ENCODE measurements at regions of chr4 and their contacts with region 1.

Region 1: GRCh38 chr4:177047070-177047850 is 254.5 kb upstream of the VEGFC start:
- DNase-seq: no peak
- H3K4me3 ChIP-seq: no peak overlapping the region
- H3K27ac ChIP-seq: no peak overlapping the region
- H3K4me1 ChIP-seq: peaks cover 0 to 7% (median 0%) of the 10 kb centered on the region in 4 donors
- H3K27me3 ChIP-seq: no peaks in the 10 kb centered on the region
- CTCF ChIP-seq: peak; percentile 73 to 88 (median 81)
- EP300 ChIP-seq: no peak
- POLR2A ChIP-seq: no peak

Region 2: GRCh38 chr4:176377780-176378179 is 669.5 kb before region 1 on chr4:
- intact Hi-C with region 1: loop called (anchors 2 kb)
- DNase-seq: no peak
- H3K4me3 ChIP-seq: no peak overlapping the region
- H3K27ac ChIP-seq: no peak overlapping the region
- H3K4me1 ChIP-seq: no peaks in the 10 kb centered on the region
- H3K27me3 ChIP-seq: no peaks in the 10 kb centered on the region
- CTCF ChIP-seq: peak; percentile 12 to 44 (median 29)
- EP300 ChIP-seq: no peak
- POLR2A ChIP-seq: no peak

Region 3: DNA sequence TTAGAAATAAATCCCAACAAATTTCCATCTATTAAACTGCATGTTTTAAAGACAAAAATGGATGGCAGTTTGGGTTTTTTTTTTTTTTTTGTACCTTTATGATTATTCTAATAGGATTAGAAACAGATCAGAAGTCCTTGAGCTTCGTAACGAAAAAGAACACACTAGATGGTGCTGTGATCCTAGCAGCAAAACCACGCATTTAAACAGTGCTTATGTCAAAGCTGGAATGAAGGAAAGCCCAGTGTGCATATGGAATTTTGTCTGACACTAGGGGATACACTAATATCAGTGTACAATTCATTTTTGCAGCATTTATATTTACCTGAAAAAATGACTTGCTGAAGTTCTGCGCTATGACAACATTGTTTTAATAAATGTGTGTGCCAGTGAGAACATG is 483.7 kb before region 1 on chr4:
- intact Hi-C with region 1: loop called (anchors 2 kb)
- DNase-seq: no peak
- H3K4me3 ChIP-seq: no peak overlapping the region
- H3K27ac ChIP-seq: no peak overlapping the region
- H3K4me1 ChIP-seq: no peaks in the 10 kb centered on the region
- H3K27me3 ChIP-seq: no peaks in the 10 kb centered on the region
- CTCF ChIP-seq: peak; percentile 22 to 43 (median 24)
- EP300 ChIP-seq: no peak
- POLR2A ChIP-seq: no peak

Region 4: GRCh38 chr4:176981551-176981950 is 65.7 kb before region 1 on chr4:
- intact Hi-C with region 1: no loop called
- DNase-seq: no peak
- H3K4me3 ChIP-seq: no peak overlapping the region
- H3K27ac ChIP-seq: peak overlapping the region in 1 of 4 donors; percentile 21
- H3K4me1 ChIP-seq: no peaks in the 10 kb centered on the region
- H3K27me3 ChIP-seq: no peaks in the 10 kb centered on the region
- CTCF ChIP-seq: no peak
- EP300 ChIP-seq: no peak
- POLR2A ChIP-seq: no peak

Measured in esophagus muscularis mucosa (tissue), 4 donors.